ENCODE measurements at regions of chr4 and their contacts with region 1.

Region 1: DNA sequence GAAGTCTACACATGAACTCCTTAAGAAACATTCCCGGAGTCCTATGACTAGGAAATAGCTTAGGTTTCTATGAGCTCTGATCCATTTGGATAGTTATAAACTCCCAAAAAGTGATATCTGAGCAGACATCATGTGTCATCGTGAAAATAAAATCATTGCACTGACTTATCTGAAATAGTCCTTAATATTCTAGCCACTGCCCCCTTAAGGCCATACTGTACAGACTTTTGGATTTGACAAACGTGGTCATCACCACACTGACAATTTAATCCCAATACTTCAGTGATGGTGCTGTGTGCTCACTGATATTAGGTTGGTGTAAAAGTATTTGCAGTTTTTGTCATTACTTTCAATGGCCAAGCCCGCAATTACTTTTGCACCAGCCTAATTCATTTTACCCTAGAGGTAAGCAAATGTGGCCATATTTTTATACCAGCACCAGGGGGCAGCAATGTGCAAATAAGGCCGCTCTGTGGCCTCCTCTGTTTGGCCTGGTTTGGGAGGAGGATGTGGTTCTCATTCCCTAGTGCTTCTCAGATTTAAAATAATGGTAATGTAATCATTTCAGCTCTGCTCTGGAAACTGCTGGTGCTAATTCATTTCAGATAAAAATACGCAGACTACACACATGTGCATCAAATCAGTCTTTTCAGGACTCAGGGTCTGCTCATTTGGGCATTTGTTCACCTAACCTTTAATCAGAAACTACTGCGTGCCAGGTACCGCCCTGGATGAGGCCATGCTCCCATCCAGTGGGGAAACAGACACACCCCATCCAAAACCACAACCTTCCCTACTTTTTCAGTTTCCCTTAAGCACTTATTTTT is 196.4 kb upstream of the C1QTNF7 start:
- DNase-seq: peak; percentile 76 to 94 (median 82)
- H3K4me3 ChIP-seq: no peak overlapping the region
- H3K27ac ChIP-seq: no peak overlapping the region
- H3K4me1 ChIP-seq: peaks cover 8 to 23% of the 10 kb centered on the region in 2 donors
- H3K27me3 ChIP-seq: no peaks in the 10 kb centered on the region
- CTCF ChIP-seq: peak; percentile 60 to 82 (median 72)
- POLR2A ChIP-seq: no peak

Region 2: GRCh38 chr4:15396157-15396800 is 164.8 kb after region 1 on chr4:
- intact Hi-C with region 1: loop called (anchors 5 to 10 kb)
- DNase-seq: peak in 6 of 7 donors; percentile 40 to 75 (median 49)
- H3K4me3 ChIP-seq: no peak overlapping the region
- H3K27ac ChIP-seq: no peak overlapping the region
- H3K4me1 ChIP-seq: peaks cover 4 to 15% of the 10 kb centered on the region in 2 donors
- H3K27me3 ChIP-seq: no peaks in the 10 kb centered on the region
- CTCF ChIP-seq: peak; percentile 48 to 68 (median 60)
- POLR2A ChIP-seq: no peak

Region 3: DNA sequence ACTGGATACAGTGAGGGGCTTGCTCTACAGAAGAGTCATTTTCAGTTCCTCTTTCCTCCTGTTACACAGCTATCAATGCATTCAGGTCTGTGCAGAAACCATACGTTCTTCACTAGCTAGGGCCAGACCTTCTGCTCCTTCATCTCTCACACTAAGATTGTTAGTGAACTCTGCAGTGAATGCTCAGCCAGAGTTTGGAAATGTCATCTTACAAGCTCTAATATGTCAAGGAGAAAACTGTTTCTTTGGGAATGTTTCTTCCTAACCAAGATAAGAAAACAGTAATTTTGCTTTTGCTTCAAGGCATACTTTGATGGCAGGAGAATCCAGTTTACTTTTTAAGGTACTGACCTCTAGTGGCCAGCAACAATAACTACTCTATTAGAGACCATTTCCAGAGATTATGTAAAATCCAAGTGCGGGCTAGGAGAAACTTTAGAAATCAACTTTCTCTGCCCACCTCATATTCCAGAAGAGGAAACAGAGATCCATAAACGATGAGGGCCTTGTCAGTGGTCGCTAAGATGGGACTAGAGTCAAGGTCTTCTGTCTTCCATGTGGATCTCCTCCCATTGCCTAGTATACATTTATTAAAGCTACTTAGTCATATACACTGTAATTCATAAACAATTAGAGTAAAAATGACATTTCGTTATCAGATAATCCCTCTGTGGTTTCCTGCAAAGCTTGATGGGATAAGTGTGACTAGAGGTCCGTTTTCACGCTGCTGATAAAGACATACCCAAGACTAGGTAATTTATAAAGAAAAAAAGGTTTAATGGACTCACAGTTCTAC is 226.1 kb after region 1 on chr4:
- intact Hi-C with region 1: loop called (anchors 5 kb)
- DNase-seq: no peak
- H3K4me3 ChIP-seq: no peak overlapping the region
- H3K27ac ChIP-seq: peak overlapping the region in 2 of 5 donors; percentile 30 to 42
- H3K4me1 ChIP-seq: peaks cover 3 to 8% of the 10 kb centered on the region in 2 donors
- H3K27me3 ChIP-seq: no peaks in the 10 kb centered on the region
- CTCF ChIP-seq: peak; percentile 76 to 81 (median 78)
- POLR2A ChIP-seq: no peak

Region 4: DNA sequence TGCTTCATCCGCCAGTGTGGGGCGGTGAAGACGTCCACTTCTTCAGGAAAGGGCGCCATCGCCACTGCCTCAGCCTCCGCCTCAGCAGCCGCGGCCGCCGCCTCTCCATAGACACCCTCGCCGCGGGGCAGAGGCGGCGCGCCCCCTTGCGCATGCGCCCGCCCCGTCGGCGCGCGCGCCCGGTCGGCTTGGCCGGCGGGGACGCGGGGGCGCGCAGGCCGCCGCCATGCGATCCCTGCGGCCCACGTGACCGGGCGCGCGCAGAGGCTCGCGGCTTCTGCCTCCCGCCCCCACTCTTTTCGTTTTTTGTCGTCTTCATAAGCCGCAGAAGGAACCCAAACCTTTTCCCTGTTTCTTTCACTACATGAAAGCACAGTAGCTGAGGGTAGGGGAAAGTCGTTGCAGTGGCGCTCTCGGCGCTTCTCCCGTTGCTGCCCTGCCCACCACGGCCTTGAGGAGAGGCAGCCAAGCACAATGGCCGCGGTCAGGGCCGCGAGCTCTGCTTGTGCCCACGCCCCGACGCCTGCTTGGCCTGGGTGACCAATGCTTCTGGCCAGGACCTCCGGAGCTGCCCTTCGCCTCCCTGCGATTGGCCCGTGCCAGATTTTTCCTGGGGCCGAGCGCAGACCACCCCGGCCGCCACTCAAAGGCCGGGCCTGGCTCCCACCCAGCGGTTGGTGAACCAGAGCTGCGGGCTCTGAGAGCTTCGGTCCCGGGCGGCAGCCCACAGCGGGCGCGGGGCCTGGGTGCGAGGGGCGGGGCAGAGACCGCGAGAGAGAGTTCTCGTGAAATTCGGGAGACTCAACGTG is 424.0 kb after region 1 on chr4 and contains the start of gene FBXL5:
- intact Hi-C with region 1: loop called in 1 of 2 experiments (anchors 10 kb)
- DNase-seq: peak; percentile 75 to 86 (median 84)
- H3K4me3 ChIP-seq: peak within 1 kb of the TSS; percentile 58 to 93 (median 76)
- H3K27ac ChIP-seq: peak within 1 kb of the TSS; percentile 99 to 100 (median 99)
- H3K4me1 ChIP-seq: peaks cover 33 to 56% of the 10 kb centered on the region in 2 donors
- H3K27me3 ChIP-seq: no peaks in the 10 kb centered on the region
- CTCF ChIP-seq: peak in 1 of 6 experiments; percentile 8
- POLR2A ChIP-seq: peak; percentile 80 to 92
- total RNA-seq, gene FBXL5: 73.9 to 141 (median 115) TPM